Activated B cell treated with CpG ODN at 0.5 μM for 24 hours (primary cell): ENCODE measurements at regions of chr11 and their contacts with region 1.

Region 1: DNA sequence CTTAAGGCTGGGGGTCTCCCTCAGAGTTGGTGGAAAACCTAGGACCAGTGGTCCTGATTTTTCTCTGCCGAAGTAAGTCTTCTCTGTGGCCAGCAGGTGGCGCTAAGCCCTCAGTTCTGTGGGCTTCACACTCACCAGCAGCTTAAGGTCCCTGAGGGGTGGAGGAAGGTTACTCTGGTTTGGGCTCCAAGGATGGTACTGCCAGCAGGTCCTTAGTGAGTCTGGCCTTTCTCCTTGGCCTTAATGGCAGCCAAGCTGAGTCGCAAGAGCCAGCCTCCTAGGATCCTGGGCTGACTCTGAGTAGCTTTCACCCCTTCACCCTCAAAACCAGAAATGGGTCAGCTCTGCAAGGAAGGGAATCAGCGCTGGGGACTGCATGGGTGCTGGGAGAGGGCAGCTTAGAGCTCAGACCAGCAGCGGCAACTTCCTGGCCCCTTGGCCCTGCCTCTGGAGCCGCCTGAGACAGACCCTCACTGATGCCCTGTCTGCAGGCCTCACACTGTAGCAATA is 4.4 kb downstream of the KCNJ11 start:
- DNase-seq: peak; percentile 65
- ATAC-seq: peak; percentile 66
- H3K4me3 Mint-ChIP-seq: no peak overlapping the region
- H3K27ac Mint-ChIP-seq: no peak overlapping the region
- H3K4me1 Mint-ChIP-seq: peaks cover 3% of the 10 kb centered on the region
- H3K27me3 Mint-ChIP-seq: no peaks in the 10 kb centered on the region
- CTCF ChIP-seq: peak; percentile 69

Region 2: GRCh38 chr11:17207317-17208258 is 176.5 kb before region 1 on chr11 and contains the start of gene PIK3C2A:
- CTCF ChIA-PET with region 1: no interaction called
- POLR2A ChIA-PET with region 1: no interaction called
- intact Hi-C with region 1: loop called (anchors 10 kb)
- DNase-seq: peak; percentile 91
- ATAC-seq: peak; percentile 95
- H3K4me3 Mint-ChIP-seq: peak within 1 kb of the TSS; percentile 99
- H3K27ac Mint-ChIP-seq: peak within 1 kb of the TSS; percentile 99
- H3K4me1 Mint-ChIP-seq: peaks cover 40% of the 10 kb centered on the region
- H3K27me3 Mint-ChIP-seq: no peaks in the 10 kb centered on the region
- CTCF ChIP-seq: no peak
- total RNA-seq, gene PIK3C2A: 35.9 and 41.2 TPM in 2 replicates

Region 3: GRCh38 chr11:17354601-17354991 is 29.5 kb before region 1 on chr11:
- CTCF ChIA-PET with region 1: interaction called, 10 read pairs
- POLR2A ChIA-PET with region 1: interaction called, 3 read pairs
- intact Hi-C with region 1: loop called (anchors 1 kb)
- DNase-seq: no peak
- ATAC-seq: no peak
- H3K4me3 Mint-ChIP-seq: peak overlapping the region; percentile 87
- H3K27ac Mint-ChIP-seq: no peak overlapping the region
- H3K4me1 Mint-ChIP-seq: peaks cover 32% of the 10 kb centered on the region
- H3K27me3 Mint-ChIP-seq: peaks cover 32% of the 10 kb centered on the region
- CTCF ChIP-seq: peak; percentile 45

Region 4: DNA sequence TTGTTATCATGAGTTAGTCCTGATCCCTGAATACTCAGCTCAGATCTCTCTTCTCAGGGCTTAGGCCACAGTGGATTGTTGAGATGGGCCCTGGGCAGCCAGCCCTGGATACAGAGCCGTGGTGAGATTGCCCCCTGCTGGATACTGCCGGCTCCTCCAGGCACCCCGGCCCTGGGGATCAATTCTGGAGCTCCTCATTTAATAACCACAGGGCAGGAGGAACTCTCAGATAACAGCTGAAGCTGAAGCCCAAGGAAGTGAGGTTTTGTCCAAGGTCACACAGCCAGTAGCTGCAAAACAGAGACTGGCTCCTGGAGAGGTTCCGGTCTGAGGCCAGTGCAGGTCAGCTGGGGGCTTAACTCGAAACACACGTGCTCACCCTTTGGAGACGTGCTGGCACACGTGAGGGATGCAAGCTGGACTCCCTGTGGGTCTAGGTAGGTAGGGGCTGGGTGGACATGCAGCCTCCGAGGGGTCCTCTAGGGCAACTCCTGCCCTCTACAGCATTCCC is 144.2 kb after region 1 on chr11:
- CTCF ChIA-PET with region 1: interaction called, 22 read pairs
- POLR2A ChIA-PET with region 1: no interaction called
- intact Hi-C with region 1: loop called (anchors 1 kb)
- DNase-seq: no peak
- ATAC-seq: peak; percentile 70
- H3K4me3 Mint-ChIP-seq: no peak overlapping the region
- H3K27ac Mint-ChIP-seq: no peak overlapping the region
- H3K4me1 Mint-ChIP-seq: no peaks in the 10 kb centered on the region
- H3K27me3 Mint-ChIP-seq: no peaks in the 10 kb centered on the region
- CTCF ChIP-seq: no peak

Region 5: GRCh38 chr11:17978553-17979287 is 594.7 kb after region 1 on chr11:
- CTCF ChIA-PET with region 1: no interaction called
- POLR2A ChIA-PET with region 1: no interaction called
- intact Hi-C with region 1: loop called (anchors 1 kb)
- DNase-seq: no peak
- ATAC-seq: peak; percentile 25
- H3K4me3 Mint-ChIP-seq: no peak overlapping the region
- H3K27ac Mint-ChIP-seq: no peak overlapping the region
- H3K4me1 Mint-ChIP-seq: no peaks in the 10 kb centered on the region
- H3K27me3 Mint-ChIP-seq: no peaks in the 10 kb centered on the region
- CTCF ChIP-seq: no peak